ACHN (cell line): ENCODE measurements at regions of chr17 and their contacts with region 1.

Region 1: GRCh38 chr17:63406689-63407330 is 39.3 kb downstream of the CYB561 start:
- DNase-seq: peak; percentile 90

Region 2: DNA sequence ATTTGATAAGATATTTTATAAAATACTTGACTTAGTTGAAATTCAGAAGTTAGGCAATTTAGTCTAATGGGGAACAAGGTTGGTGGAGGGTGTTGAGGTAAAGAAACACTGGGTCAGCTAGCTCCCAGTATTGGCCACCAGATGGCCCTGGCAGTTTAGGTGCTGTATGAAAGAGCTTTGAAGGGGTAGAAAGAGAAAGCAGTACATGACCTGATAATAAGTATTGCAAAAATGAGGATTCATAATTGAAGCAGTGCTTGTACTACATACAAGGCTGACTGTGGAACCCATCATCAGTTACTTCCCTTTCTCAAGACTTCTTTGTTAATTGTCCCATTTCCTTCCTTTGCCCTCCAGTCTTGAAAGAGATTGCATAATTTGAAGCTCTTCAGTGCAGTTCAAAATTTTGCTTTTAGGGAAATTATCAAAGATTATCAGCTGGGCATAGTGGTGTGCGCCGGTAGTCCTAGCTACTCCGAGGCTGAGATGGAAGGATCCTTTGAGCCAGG is 411.4 kb before region 1 on chr17:
- in situ Hi-C with region 1: loop called (anchors 25 kb)
- DNase-seq: peak; percentile 62

Region 3: DNA sequence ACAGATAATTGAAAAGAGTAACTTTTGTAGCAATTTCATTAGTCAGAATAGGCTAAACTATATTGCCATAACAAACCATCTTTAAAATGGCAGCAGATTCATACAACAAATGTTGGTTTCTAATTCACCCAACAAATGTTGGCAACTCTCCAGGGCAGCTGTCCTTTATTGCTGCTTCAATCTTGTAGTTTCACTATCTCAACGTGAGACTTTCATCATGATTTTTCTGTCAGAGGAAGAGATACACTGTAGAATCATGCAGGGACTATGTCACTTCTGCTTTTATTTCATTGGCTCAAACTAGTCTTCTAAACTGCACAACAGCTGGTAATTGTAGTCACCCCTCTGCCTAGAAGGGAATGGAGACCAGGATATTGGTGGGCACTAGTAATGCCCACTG is 266.6 kb before region 1 on chr17:
- in situ Hi-C with region 1: no loop called
- DNase-seq: peak; percentile 14